ENCODE measurements at regions of chr1 and their contacts with region 1.

Region 1: GRCh38 chr1:109620841-109621286 is 1.2 kb downstream of the AMPD2 start:
- DNase-seq: peak; percentile 90
- H3K4me3 ChIP-seq: peak overlapping the region; percentile 92
- H3K27ac ChIP-seq: peak overlapping the region; percentile 53
- H3K4me1 ChIP-seq: peaks cover 59% of the 10 kb centered on the region
- CTCF ChIP-seq: no peak

Region 2: GRCh38 chr1:109493805-109494539 is 126.9 kb before region 1 on chr1 and contains the start of gene CYB561D1:
- CTCF ChIA-PET with region 1: no interaction called
- POLR2A ChIA-PET with region 1: no interaction called
- intact Hi-C with region 1: loop called (anchors 5 kb)
- DNase-seq: peak; percentile 91
- H3K4me3 ChIP-seq: peak within 1 kb of the TSS; percentile 95
- H3K27ac ChIP-seq: peak within 1 kb of the TSS; percentile 68
- H3K4me1 ChIP-seq: peaks cover 14% of the 10 kb centered on the region
- CTCF ChIP-seq: peak; percentile 94
- total RNA-seq, gene CYB561D1: 5.8 and 6.2 TPM in 2 replicates

Region 3: DNA sequence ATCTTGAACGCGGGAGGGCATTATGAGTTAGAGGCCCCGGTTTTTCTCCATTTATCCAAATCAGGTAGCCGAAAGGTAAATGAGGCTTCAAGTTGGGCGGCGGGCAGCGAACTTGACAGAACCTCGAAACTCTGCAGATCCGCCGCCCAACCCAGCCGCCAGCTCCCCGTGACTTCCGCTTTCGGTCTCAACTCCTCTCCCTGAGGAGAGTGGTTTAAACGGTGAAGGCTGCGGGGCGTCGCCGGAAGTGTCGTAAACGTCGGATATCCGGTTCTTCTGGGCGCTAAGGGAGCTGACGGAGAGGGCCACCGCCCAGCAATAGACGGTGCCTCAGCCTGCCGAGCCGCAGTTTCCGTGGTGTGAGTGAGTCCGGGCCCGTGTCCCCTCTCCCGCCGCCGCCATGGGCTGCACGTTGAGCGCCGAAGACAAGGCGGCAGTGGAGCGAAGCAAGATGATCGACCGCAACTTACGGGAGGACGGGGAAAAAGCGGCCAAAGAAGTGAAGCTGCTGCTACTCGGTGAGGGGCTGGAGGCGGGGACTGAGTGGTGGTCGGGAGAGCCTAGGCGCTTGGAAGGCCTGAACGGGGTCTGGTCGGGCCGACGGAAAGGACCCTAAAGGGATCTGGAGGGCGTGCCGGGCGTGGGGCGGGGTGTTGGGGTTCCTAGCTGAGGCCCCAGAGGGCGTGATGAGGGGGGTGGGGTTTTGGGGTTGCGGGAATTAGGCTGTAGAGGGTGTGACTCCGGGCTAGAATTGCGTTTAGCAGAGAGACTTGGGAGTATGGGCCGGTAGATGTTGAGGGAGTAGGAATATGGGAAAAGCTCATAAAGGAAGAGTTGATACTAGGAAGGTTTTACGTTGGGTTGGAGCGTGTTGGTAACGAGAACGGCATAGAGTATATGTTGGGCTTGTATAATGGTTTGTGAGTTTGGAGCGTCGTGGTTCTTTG is 72.3 kb before region 1 on chr1 and contains the start of gene GNAI3:
- CTCF ChIA-PET with region 1: interaction called, 3 read pairs
- POLR2A ChIA-PET with region 1: interaction called, 14 read pairs
- intact Hi-C with region 1: loop called (anchors 2 kb)
- DNase-seq: peak; percentile 97
- H3K4me3 ChIP-seq: peak within 1 kb of the TSS; percentile 85
- H3K27ac ChIP-seq: peak within 1 kb of the TSS; percentile 79
- H3K4me1 ChIP-seq: peaks cover 25% of the 10 kb centered on the region
- CTCF ChIP-seq: no peak; the same call in 1 of the 2 replicates
- total RNA-seq, gene GNAI3: 3.8 and 4.1 TPM in 2 replicates

Measured in OCI-LY7 (cell line).